ENCODE measurements at regions of chr16 and their contacts with region 1.

Region 1: GRCh38 chr16:63129411-63130125 is 1093.3 kb upstream of the CDH8 start:
- DNase-seq: no peak
- ATAC-seq: no peak
- H3K4me3 ChIP-seq: no peak overlapping the region
- H3K4me3 Mint-ChIP-seq: no peak overlapping the region
- H3K27ac ChIP-seq: no peak overlapping the region
- H3K27ac Mint-ChIP-seq: no peak overlapping the region
- H3K4me1 ChIP-seq: no peaks in the 10 kb centered on the region
- H3K4me1 Mint-ChIP-seq: peaks cover 0 to 1% (median 0%) of the 10 kb centered on the region in 7 donors
- H3K27me3 ChIP-seq: no peaks in the 10 kb centered on the region
- H3K27me3 Mint-ChIP-seq: no peaks in the 10 kb centered on the region

Region 2: DNA sequence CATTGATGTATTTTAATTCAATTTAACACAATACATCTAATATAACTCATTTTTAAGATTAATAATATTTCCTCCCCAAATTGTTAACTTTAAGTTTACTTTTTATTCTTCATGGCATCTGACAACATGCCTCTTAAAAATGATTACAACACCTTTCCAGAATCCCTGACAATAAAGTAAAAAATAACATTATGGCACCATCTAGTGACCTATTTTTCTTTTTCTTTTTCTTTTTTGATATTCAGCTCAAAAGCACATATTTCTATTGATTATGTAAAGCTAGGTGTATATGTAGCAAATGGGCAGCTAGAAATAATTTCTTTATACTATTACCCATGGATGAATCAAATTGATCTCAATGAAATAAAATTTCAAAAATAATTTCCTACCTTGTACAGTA is 259.0 kb before region 1 on chr16:
- CTCF ChIA-PET with region 1: no interaction called
- POLR2A ChIA-PET with region 1: no interaction called
- intact Hi-C with region 1: no loop called
- DNase-seq: no peak
- ATAC-seq: no peak
- H3K4me3 ChIP-seq: no peak overlapping the region
- H3K4me3 Mint-ChIP-seq: no peak overlapping the region
- H3K27ac ChIP-seq: no peak overlapping the region
- H3K27ac Mint-ChIP-seq: no peak overlapping the region
- H3K4me1 ChIP-seq: no peaks in the 10 kb centered on the region
- H3K4me1 Mint-ChIP-seq: no peaks in the 10 kb centered on the region
- H3K27me3 ChIP-seq: no peaks in the 10 kb centered on the region
- H3K27me3 Mint-ChIP-seq: no peaks in the 10 kb centered on the region

Region 3: GRCh38 chr16:63067141-63067540 is 62.4 kb before region 1 on chr16:
- CTCF ChIA-PET with region 1: no interaction called
- POLR2A ChIA-PET with region 1: no interaction called
- intact Hi-C with region 1: loop called in 1 of 2 experiments (anchors 10 kb)
- DNase-seq: no peak
- ATAC-seq: no peak
- H3K4me3 ChIP-seq: no peak overlapping the region
- H3K4me3 Mint-ChIP-seq: no peak overlapping the region
- H3K27ac ChIP-seq: no peak overlapping the region
- H3K27ac Mint-ChIP-seq: no peak overlapping the region
- H3K4me1 ChIP-seq: no peaks in the 10 kb centered on the region
- H3K4me1 Mint-ChIP-seq: no peaks in the 10 kb centered on the region
- H3K27me3 ChIP-seq: no peaks in the 10 kb centered on the region
- H3K27me3 Mint-ChIP-seq: no peaks in the 10 kb centered on the region